Ovary (tissue), 10 donors: ENCODE measurements at regions of chrX and their contacts with region 1.

Region 1: DNA sequence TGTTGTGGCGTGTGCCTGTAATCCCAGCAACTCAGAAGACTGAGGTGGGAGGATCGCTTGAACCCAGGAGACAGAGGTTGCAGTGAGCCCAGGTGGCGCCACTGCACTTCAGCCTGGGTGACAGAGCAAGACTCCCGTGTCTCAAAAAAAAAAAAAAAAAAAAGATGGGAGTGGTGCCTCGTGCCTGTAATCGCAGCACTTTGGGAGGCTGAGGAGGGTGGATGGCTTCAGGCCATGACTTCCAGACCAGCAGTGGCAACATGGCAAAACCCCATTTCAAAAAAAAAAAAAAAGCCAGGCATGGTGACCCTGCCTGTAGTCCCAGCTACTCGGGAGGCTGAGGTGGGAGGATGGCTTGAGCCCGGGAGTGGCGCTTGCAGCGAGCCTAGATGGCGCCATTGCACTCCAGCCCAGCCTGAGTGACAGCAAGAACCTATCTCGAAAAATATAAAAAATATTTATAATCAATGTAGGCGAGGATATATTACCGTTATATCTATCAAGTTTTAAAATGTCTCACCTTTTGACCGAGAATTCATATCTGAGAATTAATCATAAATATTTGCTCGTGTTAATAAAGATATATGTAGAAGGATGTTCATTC is 27.0 kb downstream of the EIF2S3 start:
- DNase-seq: peak; percentile 43 to 74 (median 56)
- H3K4me3 ChIP-seq: no peak overlapping the region
- H3K27ac ChIP-seq: no peak overlapping the region
- H3K4me1 ChIP-seq: no peaks in the 10 kb centered on the region
- H3K27me3 ChIP-seq: no peaks in the 10 kb centered on the region
- CTCF ChIP-seq: no peak
- EP300 ChIP-seq: no peak
- POLR2A ChIP-seq: no peak

Region 2: DNA sequence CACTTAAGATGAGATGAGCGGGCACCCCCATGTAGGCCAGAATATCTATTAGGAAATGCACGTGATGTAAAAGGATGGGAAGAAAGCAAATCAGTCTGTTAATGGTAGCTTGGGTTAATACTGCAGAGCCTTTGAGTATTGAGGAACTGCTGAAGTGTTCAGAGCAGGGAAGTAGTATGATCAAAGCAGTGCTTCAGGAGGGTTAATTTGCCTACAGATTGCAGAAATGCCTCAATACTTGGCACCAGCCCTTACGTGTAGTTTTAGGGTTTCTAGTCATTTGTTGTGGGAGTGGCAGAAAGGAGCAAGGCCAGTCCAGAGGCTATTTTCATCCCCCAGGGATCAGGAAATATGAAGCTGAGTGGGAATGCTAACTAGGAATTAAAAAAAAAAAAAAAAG is 87.4 kb after region 1 on chrX:
- intact Hi-C with region 1: loop called in 1 of 4 experiments (anchors 10 kb)
- DNase-seq: no peak
- H3K4me3 ChIP-seq: no peak overlapping the region
- H3K27ac ChIP-seq: no peak overlapping the region
- H3K4me1 ChIP-seq: peaks cover 11% of the 10 kb centered on the region
- H3K27me3 ChIP-seq: no peaks in the 10 kb centered on the region
- CTCF ChIP-seq: no peak
- EP300 ChIP-seq: no peak
- POLR2A ChIP-seq: no peak

Region 3: DNA sequence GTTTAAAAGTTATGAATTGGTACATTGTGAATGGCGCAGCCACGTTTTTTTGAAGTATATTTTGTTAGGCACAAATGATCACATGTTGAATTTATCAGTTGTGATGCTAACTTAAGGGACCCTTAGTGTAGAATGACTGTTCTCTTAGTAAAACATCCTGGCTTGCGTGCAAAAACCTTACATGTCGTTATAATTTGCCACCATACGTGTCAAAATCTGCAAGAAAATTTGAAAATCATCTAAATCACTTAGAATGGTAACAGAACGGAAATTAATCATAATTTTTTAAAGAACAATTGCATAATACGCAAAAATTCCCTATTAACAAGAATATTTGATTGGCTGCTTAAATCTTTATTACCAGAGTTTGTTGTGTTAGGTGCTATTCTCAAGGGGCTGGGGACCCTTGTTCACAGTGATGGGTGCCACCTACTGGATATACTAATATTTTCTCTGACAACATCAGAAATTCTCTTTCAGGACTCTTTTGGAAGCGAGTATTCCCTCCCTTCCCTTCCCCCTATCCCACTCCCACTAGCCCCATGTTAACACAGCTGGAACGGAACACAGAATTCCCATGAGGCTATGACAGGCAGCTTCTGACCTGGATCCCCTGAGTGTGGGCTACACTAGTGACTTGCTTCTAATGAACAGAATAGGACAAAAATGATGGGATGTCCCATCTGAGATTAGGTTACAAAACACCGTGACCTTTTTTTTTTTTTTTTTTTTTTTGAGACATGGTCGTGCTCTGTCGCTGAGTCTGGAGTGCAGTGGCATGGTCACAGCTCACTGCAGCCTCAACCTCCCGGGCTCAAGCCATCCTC is 160.3 kb after region 1 on chrX:
- intact Hi-C with region 1: loop called in 2 of 4 experiments (anchors 10 kb)
- DNase-seq: no peak
- H3K4me3 ChIP-seq: no peak overlapping the region
- H3K27ac ChIP-seq: no peak overlapping the region
- H3K4me1 ChIP-seq: peaks cover 1% of the 10 kb centered on the region
- H3K27me3 ChIP-seq: no peaks in the 10 kb centered on the region
- CTCF ChIP-seq: peak; percentile 23 to 31 (median 25)
- EP300 ChIP-seq: no peak
- POLR2A ChIP-seq: no peak

Region 4: DNA sequence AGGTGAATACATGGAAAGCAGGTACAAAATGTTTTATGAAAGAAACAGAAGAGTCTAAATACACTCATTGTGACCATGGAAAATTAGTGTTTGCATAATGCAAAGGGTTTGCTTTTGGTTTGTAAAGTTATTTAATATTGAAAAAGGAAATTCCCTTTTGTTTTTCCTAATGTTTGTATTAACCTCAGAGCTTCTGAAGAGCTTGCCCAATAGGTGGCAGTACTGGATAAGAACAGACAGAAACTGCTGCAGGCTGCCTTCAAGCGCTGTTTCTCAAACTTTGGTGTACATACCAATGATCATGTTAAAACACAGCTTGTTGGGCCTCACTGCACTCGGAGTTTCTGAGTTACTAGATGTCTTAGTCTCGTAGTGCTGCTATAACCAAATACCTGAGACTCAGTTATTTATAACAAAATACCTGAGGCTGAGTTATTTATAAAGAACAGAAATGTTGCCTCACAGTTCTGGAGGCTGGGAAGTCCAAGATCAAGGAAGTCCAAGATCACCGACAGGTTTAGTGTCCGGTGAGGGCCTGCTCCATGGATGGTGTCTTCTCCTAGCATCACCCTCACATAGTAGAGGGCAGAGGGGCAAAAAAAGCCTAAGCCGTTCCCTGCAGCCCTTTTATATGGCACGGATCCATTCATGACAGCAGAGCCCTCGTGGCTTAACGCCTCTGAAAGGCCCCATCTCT is 177.9 kb after region 1 on chrX:
- intact Hi-C with region 1: loop called in 1 of 4 experiments (anchors 10 kb)
- DNase-seq: peak in 3 of 5 donors; percentile 36 to 49 (median 44)
- H3K4me3 ChIP-seq: no peak overlapping the region
- H3K27ac ChIP-seq: no peak overlapping the region
- H3K4me1 ChIP-seq: peaks cover 1% of the 10 kb centered on the region
- H3K27me3 ChIP-seq: no peaks in the 10 kb centered on the region
- CTCF ChIP-seq: peak; percentile 32 to 51 (median 42)
- EP300 ChIP-seq: no peak
- POLR2A ChIP-seq: no peak